ENCODE measurements at regions of chr7 and their contacts with region 1.

Region 1: DNA sequence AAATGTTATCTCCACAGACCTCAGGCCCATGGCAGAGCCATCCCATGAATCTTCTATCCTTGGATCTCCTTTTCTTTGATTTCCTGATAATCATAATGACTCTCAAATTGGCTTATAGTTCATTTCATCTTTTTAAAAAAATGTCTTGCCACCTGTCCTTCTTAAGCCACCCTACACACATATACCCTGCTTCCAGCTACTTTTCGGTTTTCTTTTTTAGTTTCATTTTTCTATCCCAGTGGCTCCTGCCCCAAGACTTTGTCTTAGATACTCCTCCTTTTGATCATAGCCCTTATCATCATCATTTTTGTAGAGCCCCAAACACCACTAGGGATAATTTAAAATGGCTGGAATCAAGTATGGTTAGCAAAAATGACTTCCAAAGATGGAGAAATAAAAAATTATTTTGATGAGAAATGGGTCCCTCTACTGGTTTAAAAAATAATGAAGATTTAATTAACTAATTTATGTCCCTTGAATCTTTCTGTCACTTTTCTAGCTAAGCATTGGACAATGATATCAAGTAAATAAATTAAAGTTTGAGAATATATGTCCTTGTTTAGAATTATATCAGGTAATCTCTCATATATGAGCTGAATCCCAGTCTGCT is 277.3 kb upstream of the SEMA3D start:
- DNase-seq: no peak
- ATAC-seq: no peak
- H3K4me3 Mint-ChIP-seq: no peak overlapping the region
- H3K27ac Mint-ChIP-seq: no peak overlapping the region
- H3K4me1 Mint-ChIP-seq: no peaks in the 10 kb centered on the region
- H3K27me3 Mint-ChIP-seq: peaks cover 3% of the 10 kb centered on the region
- CTCF ChIP-seq: no peak

Region 2: GRCh38 chr7:85041605-85042216 is 422.4 kb before region 1 on chr7:
- CTCF ChIA-PET with region 1: interaction called, 41 read pairs
- POLR2A ChIA-PET with region 1: no interaction called
- intact Hi-C with region 1: loop called (anchors 1 kb)
- DNase-seq: no peak
- ATAC-seq: peak; percentile 21
- H3K4me3 Mint-ChIP-seq: no peak overlapping the region
- H3K27ac Mint-ChIP-seq: no peak overlapping the region
- H3K4me1 Mint-ChIP-seq: no peaks in the 10 kb centered on the region
- H3K27me3 Mint-ChIP-seq: no peaks in the 10 kb centered on the region
- CTCF ChIP-seq: no peak

Region 3: GRCh38 chr7:85682833-85683620 is 218.9 kb after region 1 on chr7:
- CTCF ChIA-PET with region 1: no interaction called
- POLR2A ChIA-PET with region 1: no interaction called
- intact Hi-C with region 1: no loop called
- DNase-seq: no peak
- ATAC-seq: no peak
- H3K4me3 Mint-ChIP-seq: no peak overlapping the region
- H3K27ac Mint-ChIP-seq: no peak overlapping the region
- H3K4me1 Mint-ChIP-seq: no peaks in the 10 kb centered on the region
- H3K27me3 Mint-ChIP-seq: no peaks in the 10 kb centered on the region
- CTCF ChIP-seq: no peak